WTC11 (cell line): ENCODE measurements at regions of chr3 and their contacts with region 1.

Region 1: DNA sequence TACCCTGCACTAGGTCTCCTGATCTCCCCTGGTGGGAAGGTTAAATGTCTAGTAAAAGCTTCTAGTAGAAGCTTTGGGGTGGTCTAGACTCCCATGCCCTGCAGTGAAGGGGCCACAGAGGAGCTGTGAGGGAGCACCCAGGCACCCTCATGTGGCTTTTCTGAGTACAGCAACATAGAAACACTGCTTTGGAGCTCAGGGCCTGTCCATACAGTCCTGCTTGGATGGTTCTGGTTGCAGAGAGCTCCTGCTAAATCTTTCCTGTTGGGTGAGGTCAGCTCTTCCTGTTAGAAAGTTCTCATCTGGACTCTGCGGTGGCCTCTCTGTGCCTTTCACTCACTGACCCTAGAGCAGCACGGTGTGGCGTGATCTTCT is 47.8 kb downstream of the GPD1L start:
- DNase-seq: peak; percentile 37
- ATAC-seq: peak; percentile 98
- H3K4me3 Mint-ChIP-seq: no peak overlapping the region
- H3K27ac Mint-ChIP-seq: no peak overlapping the region
- H3K4me1 Mint-ChIP-seq: peaks cover 15% of the 10 kb centered on the region
- H3K27me3 Mint-ChIP-seq: peaks cover 6% of the 10 kb centered on the region
- CTCF ChIP-seq: no peak; the same call in 1 of the 2 replicates

Region 2: GRCh38 chr3:32143849-32144757 is 10.1 kb before region 1 on chr3:
- CTCF ChIA-PET with region 1: interaction called, 10 read pairs
- POLR2A ChIA-PET with region 1: no interaction called
- DNase-seq: peak; percentile 44
- ATAC-seq: peak; percentile 75
- H3K4me3 Mint-ChIP-seq: no peak overlapping the region
- H3K27ac Mint-ChIP-seq: no peak overlapping the region
- H3K4me1 Mint-ChIP-seq: peaks cover 25% of the 10 kb centered on the region
- H3K27me3 Mint-ChIP-seq: peaks cover 17% of the 10 kb centered on the region
- CTCF ChIP-seq: peak; percentile 53